ENCODE measurements at regions of chr3 and their contacts with region 1.

Region 1: GRCh38 chr3:123559040-123559861 is 25.6 kb downstream of the HACD2 start:
- DNase-seq: peak; percentile 75
- H3K4me3 Mint-ChIP-seq: no peak overlapping the region
- H3K27ac Mint-ChIP-seq: no peak overlapping the region
- H3K4me1 Mint-ChIP-seq: peaks cover 6% of the 10 kb centered on the region
- H3K27me3 Mint-ChIP-seq: no peaks in the 10 kb centered on the region

Region 2: DNA sequence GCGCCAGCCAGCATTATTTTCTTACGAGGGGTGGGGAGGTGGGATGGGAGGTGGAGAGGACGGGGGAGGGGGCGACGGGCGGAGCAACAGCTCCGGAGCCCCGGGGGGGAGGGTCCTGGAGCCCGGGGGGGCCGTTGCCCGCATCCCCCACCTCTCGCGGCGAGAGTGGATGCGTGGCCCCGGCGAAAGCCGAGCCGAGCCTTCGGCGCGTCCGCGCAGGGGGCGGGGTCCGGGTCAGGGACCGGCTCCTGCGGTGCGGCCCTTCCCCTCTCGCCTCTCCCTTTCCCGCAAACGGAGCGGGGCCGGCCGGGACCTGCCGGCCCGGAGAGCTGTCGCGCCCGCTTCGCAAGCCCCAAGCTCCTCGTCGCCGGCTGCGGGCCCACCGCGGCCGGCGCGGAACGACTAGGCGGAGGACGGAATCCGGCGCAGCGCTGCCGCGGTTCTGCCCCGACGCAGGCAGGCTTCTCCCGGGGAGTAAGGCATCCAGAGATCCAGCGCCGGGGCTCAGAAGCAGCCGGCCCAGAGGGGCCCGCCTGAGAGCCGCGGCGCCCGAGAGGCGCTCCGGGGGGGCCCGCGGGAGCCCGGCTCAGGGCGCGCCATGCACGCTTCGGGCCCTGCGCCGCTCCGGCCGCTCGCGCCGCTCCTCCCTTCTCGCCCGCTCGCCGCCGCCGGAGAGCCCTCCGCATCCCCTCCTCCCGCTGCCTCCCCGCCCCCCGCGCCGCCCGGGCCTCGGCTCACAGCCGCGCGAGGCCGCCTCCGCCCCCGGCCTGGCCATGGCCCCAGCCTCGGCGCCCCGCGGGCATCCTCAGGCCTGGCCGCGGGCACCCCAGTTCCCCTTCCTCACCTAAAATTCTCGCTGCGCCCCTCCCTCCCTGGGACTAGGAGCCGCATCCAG is 109.9 kb before region 1 on chr3:
- intact Hi-C with region 1: loop called (anchors 2 kb)
- DNase-seq: peak; percentile 60
- H3K4me3 Mint-ChIP-seq: peak overlapping the region; percentile 50
- H3K27ac Mint-ChIP-seq: no peak overlapping the region
- H3K4me1 Mint-ChIP-seq: no peaks in the 10 kb centered on the region
- H3K27me3 Mint-ChIP-seq: peaks cover 54% of the 10 kb centered on the region

Measured in activated CD4-positive, alpha-beta T cell treated with anti-CD3 and anti-CD28 coated beads, Interleukin-2, amount 10 ng/mL, durations not matched to agents 24 days and 14 days (primary cell).